Dorsolateral prefrontal cortex (tissue), 120 donors: ENCODE measurements at regions of chr21 and their contacts with region 1.

Region 1: GRCh38 chr21:45019957-45020537 is 54.3 kb upstream of the ADARB1 start:
- DNase-seq: peak in 4 of 10 donors; percentile 5 to 25 (median 22)
- H3K4me3 ChIP-seq: no peak overlapping the region
- H3K27ac ChIP-seq: no peak overlapping the region
- H3K27me3 ChIP-seq: peaks cover 0 to 52% (median 15%) of the 10 kb centered on the region in 45 donors
- CTCF ChIP-seq: no peak

Region 2: GRCh38 chr21:44510508-44511210 is 509.4 kb before region 1 on chr21:
- intact Hi-C with region 1: no loop called
- DNase-seq: peak in 1 of 10 donors; percentile 59
- H3K4me3 ChIP-seq: no peak overlapping the region
- H3K27ac ChIP-seq: no peak overlapping the region
- H3K27me3 ChIP-seq: peaks cover 0 to 19% (median 3%) of the 10 kb centered on the region in 45 donors
- CTCF ChIP-seq: peak; percentile 33 to 79 (median 64)

Region 3: DNA sequence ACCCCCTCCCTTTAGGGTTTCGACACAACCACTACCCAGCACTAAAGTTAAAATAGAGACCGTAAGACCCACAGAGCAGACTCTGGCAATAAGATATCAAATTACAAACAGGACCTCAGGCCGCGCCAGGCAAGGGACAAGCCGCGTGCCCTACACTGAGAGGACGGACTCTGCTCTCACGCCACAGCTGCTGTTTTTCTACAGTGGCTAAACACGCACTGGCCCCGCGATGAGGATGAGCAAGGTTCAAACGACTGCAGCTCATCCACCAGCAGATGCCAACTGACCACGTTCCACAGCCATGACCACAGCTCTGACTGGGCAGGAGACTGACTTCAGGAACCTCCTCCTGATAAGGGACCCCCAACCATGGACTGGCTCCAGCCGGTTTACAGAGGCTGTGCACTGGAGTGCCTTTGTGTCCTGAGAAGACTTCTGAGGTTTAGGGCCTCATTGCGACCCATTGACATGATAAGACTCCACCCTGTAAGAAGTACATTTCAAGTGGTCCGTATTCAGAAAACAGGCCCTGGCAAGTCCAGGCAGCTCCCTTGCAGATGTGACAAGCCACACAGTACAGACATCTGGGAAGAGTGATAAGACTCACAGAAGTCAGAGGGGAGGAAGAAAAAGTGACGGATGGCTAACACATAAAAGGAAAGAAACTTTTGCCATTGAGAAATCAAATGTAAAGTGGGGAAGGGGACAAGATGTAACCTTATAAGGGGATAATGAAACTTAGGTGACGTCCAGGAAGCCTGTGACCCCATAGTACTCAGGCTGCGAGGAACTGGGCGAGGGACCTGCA is 426.2 kb before region 1 on chr21:
- intact Hi-C with region 1: no loop called
- DNase-seq: no peak
- H3K4me3 ChIP-seq: no peak overlapping the region
- H3K27ac ChIP-seq: no peak overlapping the region
- H3K27me3 ChIP-seq: peaks cover 0 to 44% (median 7%) of the 10 kb centered on the region in 45 donors
- CTCF ChIP-seq: no peak

Region 4: DNA sequence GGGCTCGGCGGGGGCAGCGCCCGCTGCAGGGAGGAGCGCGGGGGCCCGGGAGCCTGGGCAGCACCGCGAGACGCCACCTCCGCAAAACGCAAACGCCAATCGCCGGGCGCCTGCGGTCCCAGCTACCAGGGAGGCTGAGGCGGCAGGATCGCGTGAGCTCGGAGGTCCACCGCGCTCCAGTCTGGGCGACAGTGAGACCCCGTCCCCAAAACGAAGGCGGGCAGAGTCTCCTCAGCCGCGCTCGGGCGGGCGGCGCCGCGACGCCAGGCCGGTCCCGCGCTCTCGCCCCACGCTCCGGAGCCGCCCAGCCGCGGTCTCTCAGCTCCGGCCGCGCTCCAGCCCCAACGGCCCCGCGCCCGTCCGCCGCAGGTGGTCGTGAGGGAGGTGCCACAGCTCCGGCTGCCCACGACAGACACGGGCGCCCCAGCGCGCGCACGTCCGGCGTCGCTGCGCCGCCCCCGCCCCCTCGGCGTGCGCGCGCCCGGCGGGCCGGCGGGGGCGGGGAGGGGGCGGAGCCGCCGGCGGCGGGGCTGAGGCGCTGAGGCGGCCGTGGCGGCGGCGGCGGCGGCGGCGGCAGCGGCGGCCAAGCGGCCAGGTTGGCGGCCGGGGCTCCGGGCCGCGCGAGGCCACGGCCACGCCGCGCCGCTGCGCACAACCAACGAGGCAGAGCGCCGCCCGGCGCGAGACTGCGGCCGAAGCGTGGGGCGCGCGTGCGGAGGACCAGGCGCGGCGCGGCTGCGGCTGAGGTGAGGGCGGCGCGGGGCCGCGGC is 54.2 kb after region 1 on chr21 and contains the start of gene ADARB1:
- intact Hi-C with region 1: loop called in 1 of 2 experiments (anchors 5 kb)
- DNase-seq: peak in 5 of 10 donors; percentile 29 to 83 (median 70)
- H3K4me3 ChIP-seq: peak within 1 kb of the TSS; percentile 71 to 98 (median 84)
- H3K27ac ChIP-seq: peak within 1 kb of the TSS in 55 of 59 donors; percentile 15 to 96 (median 87)
- H3K27me3 ChIP-seq: no peaks in the 10 kb centered on the region
- CTCF ChIP-seq: peak in 1 of 56 donors; percentile 13
- total RNA-seq, gene ADARB1: 22.6 to 83.5 (median 57.4) TPM